Activated CD4-positive, alpha-beta memory T cell treated with anti-CD3 and anti-CD28 coated beads for 36 hours (primary cell): ENCODE measurements at regions of chr17 and their contacts with region 1.

Region 1: DNA sequence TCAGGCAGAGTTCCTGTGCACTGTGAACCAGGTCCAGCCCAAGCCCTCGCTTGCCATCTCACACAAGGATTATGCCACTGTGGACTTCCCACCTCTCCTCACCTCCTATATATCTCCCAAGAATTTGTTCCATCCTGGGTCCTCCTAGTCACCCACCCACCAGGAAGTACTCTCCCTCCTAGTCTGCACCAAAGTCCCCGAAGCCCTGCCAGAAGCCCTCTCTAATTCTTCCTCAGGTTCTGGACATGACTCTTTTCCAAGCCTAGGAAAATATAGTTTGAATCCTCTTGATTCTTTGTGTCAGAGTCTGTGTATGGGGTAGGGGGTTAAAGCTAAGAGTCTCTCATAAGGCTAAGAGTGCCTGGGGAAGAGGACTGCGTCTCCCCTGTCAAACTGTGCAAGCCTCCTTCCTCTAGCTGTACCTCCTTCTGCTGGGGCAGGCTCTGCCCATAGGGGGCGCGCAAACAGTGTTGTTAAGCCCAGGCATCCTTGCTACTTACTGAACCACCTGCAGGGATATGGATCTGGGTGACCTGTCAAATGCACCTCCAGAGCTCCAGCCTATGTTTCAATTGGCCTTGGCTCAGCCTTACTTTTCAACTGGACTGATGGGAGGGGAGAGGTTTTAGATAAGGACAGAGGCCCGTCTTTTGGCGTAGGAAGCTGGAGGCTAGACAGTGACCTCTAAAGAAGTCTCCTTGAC is 16.6 kb upstream of the DLX4 start:
- DNase-seq: peak; percentile 88
- H3K4me3 Mint-ChIP-seq: no peak overlapping the region
- H3K27ac Mint-ChIP-seq: no peak overlapping the region
- H3K4me1 Mint-ChIP-seq: no peaks in the 10 kb centered on the region
- H3K27me3 Mint-ChIP-seq: peaks cover 47% of the 10 kb centered on the region

Region 2: GRCh38 chr17:49677933-49678847 is 274.2 kb before region 1 on chr17 and contains the start of gene SPOP:
- CTCF ChIA-PET with region 1: no interaction called
- POLR2A ChIA-PET with region 1: no interaction called
- intact Hi-C with region 1: no loop called
- DNase-seq: peak; percentile 100
- H3K4me3 Mint-ChIP-seq: peak within 1 kb of the TSS; percentile 95
- H3K27ac Mint-ChIP-seq: peak within 1 kb of the TSS; percentile 99
- H3K4me1 Mint-ChIP-seq: peaks cover 37% of the 10 kb centered on the region
- H3K27me3 Mint-ChIP-seq: peaks cover 4% of the 10 kb centered on the region
- total RNA-seq, gene SPOP: 53.4 to 60.0 TPM

Region 3: GRCh38 chr17:49880291-49881053 is 71.9 kb before region 1 on chr17:
- CTCF ChIA-PET with region 1: interaction called, 8 read pairs
- POLR2A ChIA-PET with region 1: no interaction called
- intact Hi-C with region 1: loop called (anchors 10 kb)
- DNase-seq: peak; percentile 84
- H3K4me3 Mint-ChIP-seq: no peak overlapping the region
- H3K27ac Mint-ChIP-seq: no peak overlapping the region
- H3K4me1 Mint-ChIP-seq: peaks cover 4% of the 10 kb centered on the region
- H3K27me3 Mint-ChIP-seq: peaks cover 31% of the 10 kb centered on the region

Region 4: DNA sequence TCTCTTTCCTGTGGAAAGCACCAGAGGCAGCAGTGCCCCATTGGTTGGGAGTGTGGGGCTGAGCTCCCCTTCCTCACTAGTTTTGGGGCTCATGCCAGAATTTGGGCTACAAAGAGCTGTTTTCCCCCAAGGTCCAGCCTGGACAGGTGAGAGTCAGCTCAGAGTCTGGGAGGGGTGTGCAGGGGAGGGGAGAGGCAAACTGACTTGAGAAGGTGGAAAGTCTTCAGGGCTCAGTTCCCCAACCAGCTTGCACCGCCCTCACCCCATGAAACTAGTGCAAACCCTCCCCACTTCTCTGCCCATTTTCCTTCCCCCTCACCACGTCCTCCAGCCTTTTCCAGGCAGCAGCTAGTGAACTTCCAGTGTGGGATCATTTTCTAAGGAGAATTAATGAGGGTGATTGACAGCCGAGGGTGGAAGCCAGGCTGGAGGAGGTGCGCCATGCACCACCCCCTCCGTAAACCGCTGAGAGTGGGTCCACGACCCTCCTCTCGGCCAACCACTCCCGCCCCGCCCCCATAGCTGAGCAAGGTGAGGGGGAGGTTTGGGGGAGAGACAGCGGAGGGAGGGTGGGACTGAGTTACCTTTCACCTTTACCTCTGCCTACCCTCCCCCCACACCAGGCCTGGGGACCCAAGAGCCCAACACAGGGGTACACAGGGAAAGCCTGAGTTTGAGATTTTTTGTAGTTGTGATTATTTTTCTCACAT is 10.4 kb after region 1 on chr17:
- CTCF ChIA-PET with region 1: interaction called, 13 read pairs
- POLR2A ChIA-PET with region 1: no interaction called
- intact Hi-C with region 1: no loop called
- DNase-seq: no peak
- H3K4me3 Mint-ChIP-seq: no peak overlapping the region
- H3K27ac Mint-ChIP-seq: no peak overlapping the region
- H3K4me1 Mint-ChIP-seq: peaks cover 23% of the 10 kb centered on the region
- H3K27me3 Mint-ChIP-seq: peaks cover 57% of the 10 kb centered on the region

Region 5: DNA sequence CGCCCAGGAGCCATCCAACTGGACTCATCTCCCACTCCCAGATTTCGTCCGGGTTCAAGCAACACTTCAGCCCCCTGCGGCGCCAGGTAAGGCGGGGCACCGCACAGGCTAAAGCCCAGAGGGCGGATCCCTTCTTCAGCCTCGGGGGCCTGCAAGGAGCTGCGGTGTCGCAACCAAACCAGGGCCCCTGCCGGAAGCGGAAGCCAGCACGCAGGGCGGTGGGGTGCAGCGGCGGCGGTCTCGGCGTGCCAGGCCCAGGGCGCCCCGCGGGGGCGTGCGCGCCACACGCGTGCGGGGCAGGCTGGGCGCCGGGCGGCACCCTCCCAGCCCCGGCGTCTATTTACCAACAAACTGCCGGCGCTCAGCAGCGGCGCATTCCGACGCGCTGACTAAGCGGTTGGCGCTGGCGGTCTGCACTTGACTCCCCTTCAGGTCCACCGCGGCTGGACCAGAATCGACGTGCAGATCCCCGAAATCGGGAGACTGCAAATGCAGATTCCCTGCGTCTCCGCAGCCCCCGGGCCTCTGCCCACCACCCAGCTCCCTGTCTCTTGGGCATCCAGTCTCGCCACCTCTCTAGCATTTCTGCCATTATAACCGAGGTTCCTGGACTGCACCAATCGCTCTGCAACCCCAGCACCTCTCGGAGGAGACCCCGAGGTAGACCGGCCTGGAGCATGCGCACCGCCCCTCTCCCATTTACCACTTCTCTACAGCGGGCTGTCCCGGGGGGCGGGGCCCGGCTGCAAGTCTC is 16.2 kb after region 1 on chr17:
- CTCF ChIA-PET with region 1: interaction called, 44 read pairs
- POLR2A ChIA-PET with region 1: no interaction called
- intact Hi-C with region 1: no loop called
- DNase-seq: peak; percentile 81
- H3K4me3 Mint-ChIP-seq: peak overlapping the region; percentile 83
- H3K27ac Mint-ChIP-seq: no peak overlapping the region
- H3K4me1 Mint-ChIP-seq: peaks cover 34% of the 10 kb centered on the region
- H3K27me3 Mint-ChIP-seq: peaks cover 80% of the 10 kb centered on the region

Region 6: GRCh38 chr17:49987681-49988441 is 35.5 kb after region 1 on chr17:
- CTCF ChIA-PET with region 1: interaction called, 264 read pairs
- POLR2A ChIA-PET with region 1: no interaction called
- intact Hi-C with region 1: no loop called
- DNase-seq: no peak
- H3K4me3 Mint-ChIP-seq: no peak overlapping the region
- H3K27ac Mint-ChIP-seq: no peak overlapping the region
- H3K4me1 Mint-ChIP-seq: no peaks in the 10 kb centered on the region
- H3K27me3 Mint-ChIP-seq: peaks cover 52% of the 10 kb centered on the region